OCI-LY7 (cell line): ENCODE measurements at regions of chr7 and their contacts with region 1.

Region 1: GRCh38 chr7:101870351-101871062 is 53.1 kb downstream of the CUX1 start:
- DNase-seq: peak; percentile 90
- H3K4me3 ChIP-seq: peak overlapping the region; percentile 57
- H3K27ac ChIP-seq: peak overlapping the region; percentile 97
- H3K4me1 ChIP-seq: peaks cover 100% of the 10 kb centered on the region
- CTCF ChIP-seq: peak; percentile 78

Region 2: DNA sequence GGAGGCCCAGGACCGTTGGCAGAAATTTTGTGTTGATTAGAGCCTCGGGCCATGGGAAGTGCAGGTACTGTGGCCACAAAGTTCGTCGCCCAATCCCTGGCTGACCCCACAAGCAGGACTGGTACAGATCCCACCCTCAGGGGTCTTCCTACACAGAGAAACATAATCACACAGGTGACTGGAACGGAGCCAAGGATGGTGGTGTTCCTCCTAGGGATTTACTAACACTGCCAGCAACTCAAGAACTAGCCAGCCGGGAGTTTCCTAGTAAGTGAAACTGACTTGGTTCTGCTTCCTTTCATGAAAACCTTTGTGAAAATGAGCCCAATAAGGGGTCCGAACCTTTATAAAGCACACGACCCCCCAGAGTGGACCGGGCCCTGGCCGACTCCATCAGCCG is 47.4 kb before region 1 on chr7:
- CTCF ChIA-PET with region 1: no interaction called
- POLR2A ChIA-PET with region 1: interaction called, 56 read pairs
- intact Hi-C with region 1: no loop called
- DNase-seq: no peak
- H3K4me3 ChIP-seq: peak overlapping the region; percentile 78
- H3K27ac ChIP-seq: peak overlapping the region; percentile 72
- H3K4me1 ChIP-seq: peaks cover 87% of the 10 kb centered on the region
- CTCF ChIP-seq: no peak

Region 3: GRCh38 chr7:101884671-101885596 is 14.4 kb after region 1 on chr7:
- CTCF ChIA-PET with region 1: interaction called, 9 read pairs
- POLR2A ChIA-PET with region 1: interaction called, 17 read pairs
- intact Hi-C with region 1: no loop called
- DNase-seq: peak; percentile 91
- H3K4me3 ChIP-seq: peak overlapping the region; percentile 61
- H3K27ac ChIP-seq: peak overlapping the region; percentile 93
- H3K4me1 ChIP-seq: peaks cover 100% of the 10 kb centered on the region
- CTCF ChIP-seq: no peak

Region 4: DNA sequence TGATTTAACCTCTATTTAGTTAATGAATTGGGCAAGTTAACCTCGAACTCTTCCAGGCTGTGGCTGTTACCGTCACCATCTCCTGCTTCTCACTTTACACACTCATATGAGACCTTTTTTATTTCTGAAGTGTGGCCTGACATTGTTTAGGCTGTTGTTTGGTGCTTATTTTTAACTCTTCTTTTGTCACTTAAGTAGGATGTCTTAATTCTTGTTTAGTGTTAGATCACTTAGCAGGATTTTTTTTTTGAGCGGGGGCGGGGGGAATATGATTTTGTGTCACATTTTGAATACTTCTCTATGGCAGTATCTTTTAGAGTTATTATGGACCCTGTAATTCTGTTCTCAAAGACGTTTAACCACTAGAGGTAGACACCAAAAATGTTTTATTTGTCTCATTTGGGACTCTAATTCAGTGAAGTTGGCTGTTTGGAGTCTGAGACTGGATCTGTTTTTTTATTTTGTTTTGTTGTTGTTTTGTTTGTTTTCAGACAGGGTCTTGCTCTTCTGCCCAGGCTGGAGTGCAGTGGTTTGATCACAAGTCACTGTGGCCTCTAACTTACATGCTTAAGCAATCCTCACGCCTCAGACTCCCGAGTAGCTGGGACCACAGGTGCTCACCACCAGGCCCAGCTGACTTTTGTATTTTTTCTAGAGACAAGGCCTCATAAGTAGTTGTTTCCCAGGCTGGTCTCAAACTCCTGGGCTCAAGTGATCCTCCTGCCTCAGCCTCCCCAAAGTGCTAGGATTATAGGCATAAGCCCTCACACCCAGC is 20.4 kb after region 1 on chr7:
- CTCF ChIA-PET with region 1: interaction called, 3 read pairs
- POLR2A ChIA-PET with region 1: interaction called, 14 read pairs
- intact Hi-C with region 1: no loop called
- DNase-seq: peak; percentile 50
- H3K4me3 ChIP-seq: peak overlapping the region; percentile 39
- H3K27ac ChIP-seq: peak overlapping the region; percentile 93
- H3K4me1 ChIP-seq: peaks cover 98% of the 10 kb centered on the region
- CTCF ChIP-seq: peak; percentile 26; the same call in 1 of the 2 replicates

Region 5: DNA sequence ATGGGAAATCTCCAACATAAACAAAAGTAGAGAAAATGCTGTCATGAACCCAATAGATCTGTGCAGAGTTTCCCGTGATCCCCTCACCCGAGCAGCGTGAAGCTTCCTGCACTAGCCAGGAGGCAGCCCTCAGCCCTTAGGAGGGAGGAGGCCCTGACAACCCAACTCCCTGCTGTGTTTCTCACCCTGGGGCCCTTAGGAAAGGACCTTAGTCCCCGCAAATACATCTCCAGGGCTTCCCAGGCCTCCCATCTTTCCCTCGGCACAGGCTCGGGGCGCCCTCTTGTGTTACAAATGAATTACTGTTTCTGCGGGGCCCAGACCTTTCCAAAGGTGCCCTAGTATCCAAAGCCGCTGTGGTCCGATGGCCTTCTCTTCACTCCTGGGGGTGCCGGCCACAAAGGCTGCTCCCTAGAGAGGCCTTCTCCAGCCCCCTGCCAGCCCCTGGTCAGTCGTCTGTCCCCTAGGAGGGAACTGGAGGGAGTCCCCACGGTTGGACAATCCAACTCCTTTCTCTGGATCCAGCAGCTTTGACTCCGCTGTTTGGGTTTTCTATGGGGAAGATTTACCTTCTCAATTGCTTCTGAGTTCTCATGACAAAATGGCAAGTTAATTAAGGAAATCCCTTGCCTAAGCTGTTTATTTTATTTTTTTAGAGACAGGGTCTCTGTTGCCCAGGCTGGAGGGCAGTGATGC is 366.2 kb after region 1 on chr7:
- CTCF ChIA-PET with region 1: no interaction called
- POLR2A ChIA-PET with region 1: interaction called, 3 read pairs
- intact Hi-C with region 1: loop called (anchors 5 kb)
- DNase-seq: peak; percentile 57
- H3K4me3 ChIP-seq: no peak overlapping the region
- H3K27ac ChIP-seq: no peak overlapping the region
- H3K4me1 ChIP-seq: peaks cover 10% of the 10 kb centered on the region
- CTCF ChIP-seq: peak; percentile 85